Activated CD8-positive, alpha-beta T cell treated with anti-CD3 and anti-CD28 coated beads for 36 hours (primary cell): ENCODE measurements at regions of chr9 and their contacts with region 1.

Region 1: GRCh38 chr9:99819856-99820684 is 1.6 kb upstream of the NR4A3 start:
- DNase-seq: peak; percentile 96
- ATAC-seq: peak; percentile 49
- H3K4me3 Mint-ChIP-seq: peak overlapping the region; percentile 100
- H3K27ac Mint-ChIP-seq: peak overlapping the region; percentile 98
- H3K4me1 Mint-ChIP-seq: peaks cover 38% of the 10 kb centered on the region
- H3K27me3 Mint-ChIP-seq: no peaks in the 10 kb centered on the region
- CTCF ChIP-seq: no peak

Region 2: DNA sequence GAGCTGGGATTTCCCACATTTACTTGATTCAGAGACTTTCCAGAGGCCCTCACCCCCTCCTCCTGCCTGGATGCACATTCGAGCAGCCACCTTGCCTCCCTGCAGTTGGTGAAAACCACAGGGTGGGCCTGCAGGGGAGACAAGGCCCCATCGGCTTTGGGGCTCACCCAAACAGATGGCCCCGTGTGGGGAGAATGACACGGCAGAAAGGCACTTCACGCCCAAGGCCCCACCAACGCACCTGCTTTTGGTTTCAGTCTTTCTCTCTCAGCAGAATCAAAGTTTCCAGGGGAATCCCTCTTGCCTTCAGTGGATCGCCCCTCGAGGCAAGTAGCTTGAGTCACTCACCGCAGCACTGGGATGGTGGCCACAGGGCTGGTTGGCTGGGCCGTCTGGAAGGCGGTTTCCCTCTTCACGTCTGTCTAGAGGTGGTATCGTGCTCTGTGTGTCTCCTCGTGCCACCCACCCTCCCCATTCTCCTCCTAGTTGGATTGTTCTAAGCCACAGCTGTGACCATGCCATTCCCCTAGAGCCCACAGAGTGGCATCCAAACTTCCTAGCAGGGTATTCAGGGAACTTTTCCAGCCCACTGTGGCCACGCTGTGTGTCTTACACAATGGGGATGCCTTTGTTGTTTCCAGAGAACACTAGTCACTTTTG is 566.2 kb before region 1 on chr9:
- CTCF ChIA-PET with region 1: no interaction called
- POLR2A ChIA-PET with region 1: no interaction called
- intact Hi-C with region 1: loop called (anchors 5 kb)
- DNase-seq: peak; percentile 98
- ATAC-seq: peak; percentile 82
- H3K4me3 Mint-ChIP-seq: peak overlapping the region; percentile 46
- H3K27ac Mint-ChIP-seq: peak overlapping the region; percentile 95
- H3K4me1 Mint-ChIP-seq: peaks cover 40% of the 10 kb centered on the region
- H3K27me3 Mint-ChIP-seq: peaks cover 9% of the 10 kb centered on the region
- CTCF ChIP-seq: no peak

Region 3: DNA sequence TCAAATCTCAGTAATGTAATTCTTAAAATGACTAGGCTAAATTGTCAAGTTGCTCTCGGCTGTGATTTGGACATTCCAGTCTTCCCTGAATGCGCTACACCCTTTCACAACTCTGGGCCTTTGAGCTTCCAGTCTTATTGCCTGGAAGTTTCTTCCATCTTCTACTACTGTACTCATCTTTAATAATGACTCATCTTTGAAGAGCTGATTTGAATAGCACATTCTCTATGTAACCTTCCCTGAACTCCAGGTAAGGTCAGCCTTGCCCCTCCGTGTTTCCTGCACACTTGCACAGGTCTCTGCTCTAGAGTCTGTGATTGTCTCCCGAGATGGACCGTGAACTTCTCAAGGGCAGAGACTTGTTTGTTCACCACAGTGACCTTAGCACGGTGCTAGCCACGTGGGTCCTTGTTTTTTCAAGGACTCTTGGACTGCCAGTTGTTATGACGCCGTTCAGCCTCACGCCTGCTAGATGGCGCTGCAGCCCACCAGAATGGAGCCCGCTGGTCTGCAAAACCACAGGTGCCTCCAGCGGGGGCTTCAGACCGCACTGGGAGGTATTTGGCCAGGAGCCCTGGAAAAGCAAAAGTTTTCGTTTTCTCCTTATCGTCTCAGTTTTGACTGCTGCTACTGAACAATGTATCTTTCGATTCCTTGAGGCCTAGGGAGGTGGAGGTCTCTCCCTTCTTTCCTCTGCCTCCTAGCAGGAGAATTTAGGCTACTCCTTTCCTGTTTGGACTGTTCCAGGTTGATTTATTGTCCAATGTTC is 553.6 kb before region 1 on chr9:
- CTCF ChIA-PET with region 1: no interaction called
- POLR2A ChIA-PET with region 1: no interaction called
- intact Hi-C with region 1: loop called (anchors 5 kb)
- DNase-seq: peak; percentile 86
- ATAC-seq: peak; percentile 90
- H3K4me3 Mint-ChIP-seq: peak overlapping the region; percentile 6
- H3K27ac Mint-ChIP-seq: no peak overlapping the region
- H3K4me1 Mint-ChIP-seq: peaks cover 27% of the 10 kb centered on the region
- H3K27me3 Mint-ChIP-seq: peaks cover 3% of the 10 kb centered on the region
- CTCF ChIP-seq: peak; percentile 97

Region 4: GRCh38 chr9:99807276-99807852 is 12.7 kb before region 1 on chr9:
- CTCF ChIA-PET with region 1: interaction called, 15 read pairs
- POLR2A ChIA-PET with region 1: interaction called, 6 read pairs
- intact Hi-C with region 1: no loop called
- DNase-seq: peak; percentile 83
- ATAC-seq: peak; percentile 50
- H3K4me3 Mint-ChIP-seq: no peak overlapping the region
- H3K27ac Mint-ChIP-seq: no peak overlapping the region
- H3K4me1 Mint-ChIP-seq: peaks cover 42% of the 10 kb centered on the region
- H3K27me3 Mint-ChIP-seq: no peaks in the 10 kb centered on the region
- CTCF ChIP-seq: peak; percentile 91

Region 5: GRCh38 chr9:99906403-99907207 is 86.5 kb after region 1 on chr9 and contains the start of gene STX17:
- CTCF ChIA-PET with region 1: interaction called, 10 read pairs
- POLR2A ChIA-PET with region 1: interaction called, 6 read pairs
- intact Hi-C with region 1: loop called (anchors 5 kb)
- DNase-seq: peak; percentile 83
- ATAC-seq: peak; percentile 92
- H3K4me3 Mint-ChIP-seq: peak within 1 kb of the TSS; percentile 97
- H3K27ac Mint-ChIP-seq: peak within 1 kb of the TSS; percentile 97
- H3K4me1 Mint-ChIP-seq: peaks cover 25% of the 10 kb centered on the region
- H3K27me3 Mint-ChIP-seq: no peaks in the 10 kb centered on the region
- CTCF ChIP-seq: no peak
- total RNA-seq, gene STX17: 33.3 to 41.9 TPM

Region 6: GRCh38 chr9:100011062-100011681 is 191.1 kb after region 1 on chr9:
- CTCF ChIA-PET with region 1: interaction called, 13 read pairs
- POLR2A ChIA-PET with region 1: no interaction called
- intact Hi-C with region 1: loop called (anchors 5 kb)
- DNase-seq: peak; percentile 46
- ATAC-seq: no peak
- H3K4me3 Mint-ChIP-seq: no peak overlapping the region
- H3K27ac Mint-ChIP-seq: no peak overlapping the region
- H3K4me1 Mint-ChIP-seq: no peaks in the 10 kb centered on the region
- H3K27me3 Mint-ChIP-seq: no peaks in the 10 kb centered on the region
- CTCF ChIP-seq: peak; percentile 92